ENCODE measurements at regions of chr20 and their contacts with region 1.

Region 1: DNA sequence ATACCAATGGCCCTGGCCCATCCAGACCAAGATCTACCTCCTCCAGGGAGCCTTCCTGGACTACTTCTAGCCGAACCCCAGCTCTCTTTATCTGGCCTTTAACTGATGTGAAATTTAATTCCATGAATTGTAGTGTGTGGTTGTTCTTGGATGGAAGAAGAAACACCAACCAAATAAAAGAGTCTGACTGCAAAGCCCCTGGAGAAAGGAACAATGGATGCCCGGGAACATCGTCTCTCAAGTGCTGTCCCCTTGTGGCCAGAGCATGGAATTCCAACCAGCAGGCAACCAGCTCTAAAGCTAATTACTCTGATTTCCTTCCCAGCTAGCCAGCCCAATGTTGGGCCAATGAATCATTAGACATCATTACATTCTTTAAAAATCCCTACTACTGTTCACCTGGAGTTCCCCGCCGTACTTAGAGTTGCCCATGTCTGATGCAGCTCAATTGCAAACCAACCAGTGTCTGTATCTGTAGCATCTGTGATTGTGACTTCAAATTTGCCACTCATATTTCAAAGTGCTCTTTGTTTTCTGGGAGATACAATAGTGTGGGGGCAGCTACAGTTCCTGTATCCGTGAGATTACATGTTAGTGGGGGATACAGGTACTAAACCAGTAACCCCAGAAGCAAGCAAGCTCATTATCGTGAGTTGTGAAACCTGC is 141.1 kb downstream of the ANKRD60 start:
- DNase-seq: peak; percentile 86
- H3K4me3 Mint-ChIP-seq: no peak overlapping the region
- H3K27ac Mint-ChIP-seq: peak overlapping the region; percentile 97
- H3K4me1 Mint-ChIP-seq: peaks cover 40% of the 10 kb centered on the region
- H3K27me3 Mint-ChIP-seq: no peaks in the 10 kb centered on the region
- CTCF ChIP-seq: peak; percentile 96

Region 2: DNA sequence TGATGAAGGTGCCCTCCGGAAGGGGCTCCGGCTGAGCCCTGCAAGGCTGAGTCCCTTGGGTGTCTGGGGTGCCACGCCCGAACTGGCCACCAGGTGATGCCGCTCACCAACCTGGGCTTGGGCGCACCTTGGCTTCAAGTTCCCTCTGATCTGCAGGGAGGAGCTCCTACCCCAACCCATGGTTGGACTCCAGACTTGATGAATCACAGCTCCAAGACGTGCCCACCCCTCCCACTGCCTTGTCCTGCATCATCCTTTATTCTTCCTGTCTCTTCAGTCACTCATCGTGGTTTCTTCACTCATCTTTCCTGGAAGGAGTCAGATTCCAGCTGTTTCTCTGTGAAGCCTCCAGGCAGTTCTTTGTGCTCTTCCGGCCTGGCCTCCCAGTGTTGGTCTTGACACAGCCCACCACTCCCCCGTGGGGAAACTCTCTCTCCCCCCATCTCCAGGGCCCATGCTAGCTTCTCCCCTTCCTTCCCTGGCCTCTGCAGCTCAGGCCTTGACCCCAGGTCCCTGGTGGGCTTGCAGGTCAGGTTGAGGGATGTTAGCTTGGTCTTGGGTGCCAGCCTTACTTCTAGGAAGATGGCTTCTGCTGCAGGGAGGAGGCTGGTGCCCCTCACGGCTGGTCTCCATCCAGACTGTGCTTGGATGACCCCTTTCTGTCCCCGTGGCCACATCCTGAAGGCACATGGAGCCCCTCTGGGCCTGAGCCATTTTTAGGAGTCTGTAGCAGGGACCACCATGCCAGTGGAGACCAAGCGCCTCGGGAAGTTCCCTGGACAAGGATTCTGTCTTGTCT is 464.5 kb before region 1 on chr20:
- CTCF ChIA-PET with region 1: interaction called, 13 read pairs
- intact Hi-C with region 1: loop called (anchors 2 kb)
- DNase-seq: peak; percentile 96
- H3K4me3 Mint-ChIP-seq: peak overlapping the region; percentile 11
- H3K27ac Mint-ChIP-seq: peak overlapping the region; percentile 18
- H3K4me1 Mint-ChIP-seq: peaks cover 40% of the 10 kb centered on the region
- H3K27me3 Mint-ChIP-seq: no peaks in the 10 kb centered on the region
- CTCF ChIP-seq: peak; percentile 99

Region 3: GRCh38 chr20:57698117-57698866 is 389.0 kb before region 1 on chr20:
- CTCF ChIA-PET with region 1: interaction called, 10 read pairs
- intact Hi-C with region 1: loop called (anchors 2 kb)
- DNase-seq: peak; percentile 94
- H3K4me3 Mint-ChIP-seq: peak overlapping the region; percentile 88
- H3K27ac Mint-ChIP-seq: peak overlapping the region; percentile 97
- H3K4me1 Mint-ChIP-seq: peaks cover 92% of the 10 kb centered on the region
- H3K27me3 Mint-ChIP-seq: no peaks in the 10 kb centered on the region
- CTCF ChIP-seq: no peak

Region 4: GRCh38 chr20:57810511-57811373 is 276.6 kb before region 1 on chr20:
- CTCF ChIA-PET with region 1: interaction called, 5 read pairs
- intact Hi-C with region 1: loop called (anchors 10 kb)
- DNase-seq: peak; percentile 85
- H3K4me3 Mint-ChIP-seq: no peak overlapping the region
- H3K27ac Mint-ChIP-seq: peak overlapping the region; percentile 31
- H3K4me1 Mint-ChIP-seq: peaks cover 24% of the 10 kb centered on the region
- H3K27me3 Mint-ChIP-seq: peaks cover 15% of the 10 kb centered on the region
- CTCF ChIP-seq: no peak

Region 5: DNA sequence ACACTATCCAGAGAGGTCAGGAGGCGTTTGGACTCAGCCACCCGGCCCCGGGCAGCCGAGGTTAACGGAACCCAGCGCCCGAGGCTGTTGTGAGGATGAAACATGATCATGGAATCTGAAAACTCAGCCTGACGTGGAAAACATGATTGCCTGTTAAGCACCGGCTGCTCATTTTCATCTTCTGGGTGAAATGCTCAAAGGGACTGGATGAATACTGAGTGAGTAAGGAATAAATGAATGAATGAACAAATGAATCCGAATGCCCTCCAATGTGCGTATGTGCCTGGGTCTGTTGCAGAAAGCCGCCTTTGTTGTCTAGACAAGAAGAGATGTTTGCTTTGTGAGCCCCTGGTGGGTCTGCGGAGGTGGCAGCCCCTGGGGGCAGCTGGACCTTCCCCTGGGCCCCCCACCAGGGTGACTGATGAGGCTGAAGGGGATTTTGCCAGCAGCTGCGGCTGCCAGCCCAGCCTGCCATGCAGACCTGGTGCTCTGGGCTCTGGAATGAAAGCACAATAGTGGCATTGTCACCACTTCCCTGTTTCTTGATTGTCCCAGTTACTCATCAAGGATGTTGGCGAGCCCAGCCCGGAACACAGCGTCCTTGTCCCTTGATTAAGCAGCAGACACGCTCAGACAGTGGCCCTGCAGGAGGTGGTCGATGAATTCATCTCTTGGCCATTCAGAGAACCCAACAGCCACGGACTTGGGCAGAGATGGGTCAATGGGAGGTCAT is 69.9 kb before region 1 on chr20:
- CTCF ChIA-PET with region 1: interaction called, 10 read pairs
- intact Hi-C with region 1: loop called (anchors 1 kb)
- DNase-seq: peak; percentile 99
- H3K4me3 Mint-ChIP-seq: peak overlapping the region; percentile 12
- H3K27ac Mint-ChIP-seq: peak overlapping the region; percentile 94
- H3K4me1 Mint-ChIP-seq: peaks cover 75% of the 10 kb centered on the region
- H3K27me3 Mint-ChIP-seq: no peaks in the 10 kb centered on the region
- CTCF ChIP-seq: no peak

Region 6: DNA sequence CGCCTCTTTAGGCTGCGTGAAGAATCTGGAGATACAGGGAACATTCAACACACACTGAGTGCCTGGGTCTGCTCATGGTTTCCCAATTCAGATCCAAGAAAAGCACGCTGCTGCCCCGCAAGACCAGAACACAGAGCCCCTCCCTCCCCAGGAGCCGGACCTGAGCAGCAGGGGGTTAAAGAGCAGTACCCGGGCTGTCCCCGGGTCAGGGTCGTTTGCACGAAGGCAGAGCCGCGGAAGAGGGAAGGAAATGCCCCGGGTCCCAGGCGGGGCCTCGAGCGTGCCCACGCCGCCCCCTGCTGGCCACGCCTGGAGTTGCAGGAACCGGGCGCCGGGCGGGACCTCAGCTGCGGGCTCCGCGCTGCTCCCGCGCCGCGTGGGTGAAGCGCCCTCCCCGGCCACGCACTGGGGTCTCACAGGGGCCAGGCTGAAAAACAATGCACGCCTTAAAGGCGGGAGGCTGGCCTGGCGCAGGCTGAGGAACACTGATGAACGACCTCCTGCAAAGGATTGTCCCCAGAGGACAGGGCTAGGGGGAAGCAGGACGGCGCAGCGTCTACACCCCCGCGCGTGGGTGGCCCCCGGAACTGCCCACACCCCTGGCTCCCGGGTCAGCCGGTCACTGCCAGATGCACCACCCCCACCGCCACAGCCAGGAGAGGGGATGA is 92.2 kb after region 1 on chr20:
- CTCF ChIA-PET with region 1: interaction called, 10 read pairs
- intact Hi-C with region 1: loop called (anchors 1 kb)
- DNase-seq: peak; percentile 92
- H3K4me3 Mint-ChIP-seq: peak overlapping the region; percentile 68
- H3K27ac Mint-ChIP-seq: peak overlapping the region; percentile 91
- H3K4me1 Mint-ChIP-seq: peaks cover 35% of the 10 kb centered on the region
- H3K27me3 Mint-ChIP-seq: no peaks in the 10 kb centered on the region
- CTCF ChIP-seq: peak; percentile 100

Measured in Calu3 (cell line).